Sigmoid colon (tissue), 7 donors: ENCODE measurements at regions of chr16 and their contacts with region 1.

Region 1: DNA sequence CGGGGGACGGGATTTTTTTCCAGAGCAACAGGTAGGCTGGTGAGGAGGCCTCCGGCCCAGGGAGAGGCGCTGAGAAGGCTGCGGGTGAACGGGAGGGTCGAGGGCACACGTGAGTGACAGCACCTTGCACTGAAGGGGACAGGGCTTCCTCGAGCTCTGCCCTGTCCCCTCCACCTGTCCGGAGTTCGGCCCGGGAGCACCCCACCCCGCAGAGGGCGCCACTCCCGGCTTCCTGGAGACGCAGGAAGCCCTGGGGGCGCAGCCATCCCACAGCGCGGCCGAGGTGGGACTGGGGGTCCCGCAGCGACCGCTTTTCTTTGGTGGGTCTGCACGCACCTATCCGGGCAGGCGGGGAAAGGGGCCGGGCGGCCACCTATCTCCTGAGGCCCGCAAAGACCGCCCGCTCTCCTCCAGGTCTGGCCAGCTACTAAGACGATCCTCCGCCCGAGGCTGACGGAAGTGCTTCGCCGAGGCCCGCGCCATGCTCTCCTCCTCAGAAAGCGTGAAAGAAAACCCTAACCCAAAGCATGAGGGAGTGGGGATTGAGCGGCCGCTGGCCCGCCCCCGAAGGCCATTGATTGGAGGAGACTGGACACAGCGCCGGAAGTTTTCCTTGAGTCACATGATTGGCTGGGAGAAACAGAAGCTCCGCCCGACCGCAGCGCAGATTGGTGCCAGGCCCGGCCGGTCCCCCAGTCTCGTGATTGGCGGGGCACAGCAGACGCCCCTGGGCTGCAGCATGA is 34.3 kb downstream of the DDX19A start:
- DNase-seq: peak; percentile 99
- H3K4me3 ChIP-seq: peak overlapping the region; percentile 45 to 72 (median 61)
- H3K27ac ChIP-seq: peak overlapping the region; percentile 73 to 92 (median 85)
- H3K4me1 ChIP-seq: peaks cover 0 to 23% (median 14%) of the 10 kb centered on the region in 4 donors
- H3K27me3 ChIP-seq: no peaks in the 10 kb centered on the region
- CTCF ChIP-seq: peak in 1 of 4 experiments; percentile 23
- EP300 ChIP-seq: no peak
- POLR2A ChIP-seq: peak in 1 of 2 donors; percentile 6

Region 2: DNA sequence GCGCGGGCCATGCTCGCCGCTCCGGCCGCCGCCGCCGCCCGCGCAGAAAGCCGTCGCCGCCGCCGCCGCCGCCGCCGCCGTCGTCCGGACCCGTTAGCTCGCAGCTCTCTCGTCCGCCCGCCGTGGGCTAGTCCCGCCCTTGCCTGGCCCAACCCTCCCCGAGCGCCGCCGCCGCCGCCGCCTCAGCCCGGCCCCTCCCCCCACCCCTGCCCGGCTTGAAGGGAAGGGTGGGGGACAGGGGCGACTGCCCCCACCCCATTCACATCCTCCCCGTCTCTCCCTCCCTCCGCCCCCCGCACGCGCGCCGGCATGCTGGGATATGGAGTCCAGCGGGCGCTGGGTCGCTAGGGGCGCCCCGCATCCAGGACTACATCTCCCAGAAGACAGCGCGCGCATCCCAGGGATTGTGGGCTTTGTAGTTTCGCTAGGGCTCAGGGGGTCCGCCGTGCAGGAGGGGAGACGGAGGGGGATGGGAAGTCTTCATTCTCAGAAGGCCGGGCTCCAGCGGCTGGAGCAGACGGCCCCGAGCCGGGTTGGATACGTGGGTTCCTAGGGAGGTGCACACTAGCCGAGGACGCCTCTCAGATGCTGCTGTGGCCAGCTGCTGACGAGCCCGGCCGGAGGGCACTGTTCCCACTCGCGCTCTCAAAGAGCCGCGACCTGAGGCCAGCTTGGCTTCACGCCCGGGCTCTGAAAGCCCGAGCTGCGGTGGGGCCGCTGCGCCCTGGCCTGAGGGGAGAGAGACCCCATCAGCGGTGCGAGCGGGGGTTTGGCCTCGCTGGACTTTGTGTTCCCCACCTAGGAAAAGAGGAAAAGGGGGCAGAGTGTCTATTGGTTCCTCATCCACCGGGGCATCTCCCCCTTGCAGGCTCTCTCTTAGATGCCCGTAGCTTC is 58.2 kb after region 1 on chr16 and contains the start of gene ST3GAL2:
- intact Hi-C with region 1: loop called (anchors 2 kb)
- DNase-seq: peak; percentile 98
- H3K4me3 ChIP-seq: peak within 1 kb of the TSS; percentile 50 to 95 (median 85)
- H3K27ac ChIP-seq: peak within 1 kb of the TSS; percentile 75 to 87 (median 79)
- H3K4me1 ChIP-seq: peaks cover 0 to 38% (median 32%) of the 10 kb centered on the region in 4 donors
- H3K27me3 ChIP-seq: no peaks in the 10 kb centered on the region
- CTCF ChIP-seq: no peak
- EP300 ChIP-seq: no peak
- POLR2A ChIP-seq: no peak
- total RNA-seq, gene ST3GAL2: 14.0 to 21.3 (median 16.6) TPM